HEK293T (cell line): ENCODE measurements at regions of chr3 and their contacts with region 1.

Region 1: GRCh38 chr3:69791919-69792399 is 52.7 kb downstream of the MITF start:
- DNase-seq: peak; percentile 14

Region 2: GRCh38 chr3:69691860-69692259 is 100.1 kb before region 1 on chr3:
- CTCF ChIA-PET with region 1: interaction called, 31 read pairs
- POLR2A ChIA-PET with region 1: no interaction called
- DNase-seq: no peak